H1 (cell line): ENCODE measurements at regions of chr1 and their contacts with region 1.

Region 1: DNA sequence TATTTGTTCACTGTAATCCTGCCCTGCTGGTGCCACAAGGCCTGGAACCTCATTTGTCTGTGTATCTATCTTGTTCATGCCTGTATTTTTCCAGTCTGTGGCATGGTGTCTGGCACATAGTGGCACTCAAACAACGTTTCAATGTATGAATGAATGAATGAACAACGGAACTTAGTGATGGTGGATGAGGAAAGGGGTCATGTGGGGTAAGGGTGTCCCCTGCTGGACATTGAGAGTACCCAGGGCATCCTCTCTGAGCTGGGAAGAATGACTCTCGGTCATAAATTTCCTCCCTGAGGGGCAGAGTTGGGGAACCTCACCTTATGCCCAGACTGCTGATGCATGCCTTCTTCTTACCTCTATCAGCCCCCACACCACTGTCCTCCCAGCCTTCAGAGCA is 18.9 kb upstream of the ZNF683 start:
- DNase-seq: no peak
- H3K4me3 ChIP-seq: no peak overlapping the region
- H3K27ac ChIP-seq: no peak overlapping the region
- H3K4me1 ChIP-seq: peaks cover 1 to 10% (median 3%) of the 10 kb centered on the region in 4 experiments; a peak in 6 of 7 replicates
- H3K27me3 ChIP-seq: no peaks in the 10 kb centered on the region
- CTCF ChIP-seq: peak; percentile 81 to 93 (median 83)
- EP300 ChIP-seq: no peak
- POLR2A ChIP-seq: no peak
- RAD21 ChIP-seq: peak; percentile 94

Region 2: GRCh38 chr1:26328597-26328996 is 62.9 kb before region 1 on chr1:
- CTCF ChIA-PET with region 1: interaction called, 10 read pairs
- POLR2A ChIA-PET with region 1: no interaction called
- DNase-seq: no peak
- H3K4me3 ChIP-seq: no peak overlapping the region
- H3K27ac ChIP-seq: peak overlapping the region; percentile 20; the same call in 1 of the 2 replicates
- H3K4me1 ChIP-seq: no peaks in the 10 kb centered on the region
- H3K27me3 ChIP-seq: no peaks in the 10 kb centered on the region
- CTCF ChIP-seq: no peak
- EP300 ChIP-seq: no peak
- POLR2A ChIP-seq: no peak
- RAD21 ChIP-seq: no peak

Region 3: DNA sequence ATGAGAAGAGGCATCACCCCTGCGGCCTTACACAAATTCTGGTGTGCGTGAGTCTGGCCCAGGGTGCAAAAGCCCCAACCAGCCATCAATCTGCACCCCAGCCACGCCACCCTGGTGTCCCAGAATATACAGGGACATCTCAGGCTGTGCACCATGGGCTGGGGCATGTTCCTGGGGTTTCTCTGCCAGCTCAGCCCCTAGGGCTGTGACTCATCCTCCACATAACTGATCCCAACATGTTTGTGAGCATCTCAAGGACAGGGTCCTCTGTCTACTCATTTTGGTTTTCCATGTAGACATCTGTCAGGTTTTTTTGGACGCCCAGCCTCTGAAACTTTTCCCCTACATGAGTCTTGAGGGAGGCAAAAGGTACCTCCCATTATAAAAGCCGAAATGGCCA is 19.4 kb before region 1 on chr1:
- CTCF ChIA-PET with region 1: interaction called, 24 read pairs
- POLR2A ChIA-PET with region 1: interaction called, 3 read pairs
- DNase-seq: no peak
- H3K4me3 ChIP-seq: no peak overlapping the region
- H3K27ac ChIP-seq: no peak overlapping the region
- H3K4me1 ChIP-seq: peaks cover 0 to 2% (median 0%) of the 10 kb centered on the region in 4 experiments; a peak in 3 of 7 replicates
- H3K27me3 ChIP-seq: no peaks in the 10 kb centered on the region
- CTCF ChIP-seq: no peak
- EP300 ChIP-seq: no peak
- POLR2A ChIP-seq: no peak
- RAD21 ChIP-seq: no peak

Region 4: DNA sequence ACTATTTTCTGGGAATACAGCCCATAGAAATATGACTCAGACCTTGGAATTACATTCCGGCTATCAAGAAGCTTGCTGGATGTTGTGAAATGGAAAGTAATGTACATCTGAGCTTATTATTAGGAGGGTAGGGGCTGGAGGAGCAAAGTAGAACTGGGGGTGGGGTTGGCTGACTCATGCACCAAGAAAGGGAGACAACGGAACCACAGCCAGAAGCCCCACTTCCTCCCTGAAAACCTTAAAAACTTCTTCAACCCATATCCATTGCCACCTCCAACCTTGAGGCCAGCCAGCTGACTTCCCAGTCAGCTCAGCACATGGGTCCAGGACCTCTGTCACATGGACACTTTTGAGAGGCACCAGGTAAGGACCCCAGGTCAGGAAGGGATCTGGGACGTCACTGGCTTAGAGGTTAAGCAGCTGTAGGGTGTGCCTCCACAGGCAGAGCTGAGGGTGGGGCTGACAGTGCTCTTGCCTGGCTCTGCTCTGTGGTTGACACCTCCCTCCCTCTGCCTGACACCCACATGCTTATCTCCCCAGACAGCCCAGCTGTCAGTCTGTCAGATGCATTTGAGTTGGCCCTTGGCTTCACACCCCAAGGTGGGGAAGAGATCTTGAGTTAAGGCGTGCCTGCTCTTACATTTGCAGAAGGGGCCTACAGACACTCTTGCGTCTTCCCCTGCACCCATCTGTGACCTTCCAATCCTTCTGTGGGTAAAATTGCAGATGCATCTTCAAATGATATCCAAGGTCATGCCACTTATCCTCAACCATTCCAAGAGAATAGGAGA is 13.2 kb before region 1 on chr1:
- CTCF ChIA-PET with region 1: interaction called, 16 read pairs
- POLR2A ChIA-PET with region 1: no interaction called
- DNase-seq: no peak
- H3K4me3 ChIP-seq: no peak overlapping the region
- H3K27ac ChIP-seq: no peak overlapping the region
- H3K4me1 ChIP-seq: peaks cover 0 to 2% (median 0%) of the 10 kb centered on the region in 4 experiments; a peak in 2 of 7 replicates
- H3K27me3 ChIP-seq: no peaks in the 10 kb centered on the region
- CTCF ChIP-seq: no peak
- EP300 ChIP-seq: no peak
- POLR2A ChIP-seq: no peak
- RAD21 ChIP-seq: no peak